HCT116 (cell line): ENCODE measurements at regions of chr13 and their contacts with region 1.

Region 1: GRCh38 chr13:60396783-60397703 is at the start of gene TDRD3:
- DNase-seq: peak; percentile 76
- ATAC-seq: peak; percentile 76
- H3K4me3 ChIP-seq: peak within 1 kb of the TSS; percentile 82 to 84
- H3K27ac ChIP-seq: peak within 1 kb of the TSS; percentile 83
- H3K4me1 ChIP-seq: peaks cover 7 to 26% of the 10 kb centered on the region in 2 experiments
- H3K27me3 ChIP-seq: no peaks in the 10 kb centered on the region
- CTCF ChIP-seq: peak; percentile 37 to 81 (median 77); a peak in 5 of 6 replicates
- POLR2A ChIP-seq: no peak
- RAD21 ChIP-seq: no peak
- total RNA-seq, gene TDRD3: 16.9 TPM

Region 2: DNA sequence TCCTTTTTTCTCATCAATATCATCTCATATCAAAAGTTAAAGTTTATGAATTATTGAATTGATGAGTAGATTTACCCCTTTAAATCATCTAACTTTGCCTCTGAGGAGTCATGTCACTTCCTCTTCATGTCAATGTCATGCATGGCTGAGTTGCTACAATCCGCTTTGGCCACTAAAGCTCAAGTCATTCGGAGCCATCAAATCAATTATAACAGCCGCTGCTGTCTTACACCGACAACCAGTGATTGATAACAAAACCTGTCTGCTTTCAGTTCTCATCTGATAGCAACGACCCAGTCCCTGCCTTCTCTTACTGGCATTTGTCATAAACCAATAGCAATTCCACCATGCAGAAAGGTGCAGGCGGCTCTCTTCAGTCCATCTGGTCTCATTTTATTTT is 662.6 kb before region 1 on chr13:
- CTCF ChIA-PET with region 1: no interaction called
- POLR2A ChIA-PET with region 1: no interaction called
- RAD21 ChIA-PET with region 1: no interaction called
- intact Hi-C with region 1: no loop called
- DNase-seq: no peak
- ATAC-seq: no peak
- H3K4me3 ChIP-seq: no peak overlapping the region
- H3K27ac ChIP-seq: no peak overlapping the region
- H3K4me1 ChIP-seq: no peaks in the 10 kb centered on the region
- H3K27me3 ChIP-seq: no peaks in the 10 kb centered on the region
- CTCF ChIP-seq: no peak
- POLR2A ChIP-seq: no peak
- RAD21 ChIP-seq: no peak

Region 3: DNA sequence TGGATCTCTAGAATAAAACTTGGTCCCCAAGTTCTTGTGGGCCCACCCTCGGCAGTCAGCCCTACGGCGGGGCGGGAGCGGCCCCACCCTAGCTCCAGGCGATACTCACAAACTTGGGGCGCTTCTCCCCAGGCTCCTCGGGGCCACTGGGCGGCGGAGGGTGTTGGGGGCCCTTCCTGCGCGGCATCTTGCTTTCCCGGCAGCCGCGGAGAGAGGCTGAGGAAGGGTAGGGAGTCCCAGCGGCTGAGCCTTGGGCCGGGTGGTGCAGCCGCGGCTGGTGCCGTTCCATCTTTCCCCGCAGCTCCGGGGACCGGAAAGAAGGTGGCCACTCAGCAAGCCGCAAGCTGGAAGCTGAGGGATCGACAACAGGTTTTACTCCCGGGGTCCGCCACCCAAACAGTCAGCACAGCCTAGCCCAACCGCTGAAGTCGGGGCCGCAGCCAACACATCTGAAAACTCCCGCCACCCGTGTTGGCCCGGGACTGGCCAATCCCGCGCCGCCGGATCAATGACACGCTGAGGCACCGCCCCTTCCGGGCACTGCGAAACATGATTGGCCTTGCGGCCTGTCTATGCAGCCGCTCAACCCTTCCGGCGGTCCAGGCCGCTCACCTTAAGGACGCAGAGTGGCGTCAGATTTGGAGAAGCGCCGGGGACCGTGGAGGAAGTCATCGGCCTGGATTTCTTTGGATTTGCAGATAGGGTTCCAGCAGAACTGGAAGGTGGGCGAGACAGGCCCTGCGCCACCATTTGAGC is 233.4 kb before region 1 on chr13 and contains the start of gene DIAPH3:
- CTCF ChIA-PET with region 1: no interaction called
- POLR2A ChIA-PET with region 1: no interaction called
- RAD21 ChIA-PET with region 1: no interaction called
- intact Hi-C with region 1: loop called (anchors 2 kb)
- DNase-seq: peak; percentile 86
- ATAC-seq: peak; percentile 98
- H3K4me3 ChIP-seq: peak within 1 kb of the TSS; percentile 85 to 99
- H3K27ac ChIP-seq: peak within 1 kb of the TSS; percentile 84
- H3K4me1 ChIP-seq: peaks cover 11 to 16% of the 10 kb centered on the region in 2 experiments; a peak in 3 of 4 replicates
- H3K27me3 ChIP-seq: no peaks in the 10 kb centered on the region
- CTCF ChIP-seq: no peak
- POLR2A ChIP-seq: peak; percentile 78
- RAD21 ChIP-seq: no peak
- total RNA-seq, gene DIAPH3: 22.8 TPM

Region 4: DNA sequence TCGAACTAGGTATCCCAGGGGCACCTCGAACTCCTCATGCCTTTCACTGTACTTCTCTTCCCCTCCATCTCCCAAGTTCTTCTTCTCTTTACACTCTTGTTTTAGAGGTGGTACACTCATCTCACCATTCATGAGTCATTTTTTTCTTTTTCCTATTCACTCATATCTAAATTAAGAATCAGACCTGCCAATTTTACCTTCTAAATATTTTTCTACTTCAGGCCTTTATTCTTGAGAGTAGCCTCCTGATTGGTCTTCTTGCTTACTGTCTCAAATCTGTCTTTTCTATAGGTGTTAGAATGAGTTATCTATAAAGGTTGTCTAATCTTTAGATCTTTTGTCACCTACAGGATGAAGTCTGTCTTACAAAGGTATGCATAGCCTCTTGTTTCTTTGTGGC is 20.7 kb after region 1 on chr13:
- CTCF ChIA-PET with region 1: no interaction called
- POLR2A ChIA-PET with region 1: no interaction called
- RAD21 ChIA-PET with region 1: no interaction called
- intact Hi-C with region 1: no loop called
- DNase-seq: no peak
- ATAC-seq: no peak
- H3K4me3 ChIP-seq: no peak overlapping the region
- H3K27ac ChIP-seq: no peak overlapping the region
- H3K4me1 ChIP-seq: no peaks in the 10 kb centered on the region
- H3K27me3 ChIP-seq: no peaks in the 10 kb centered on the region
- CTCF ChIP-seq: no peak
- POLR2A ChIP-seq: no peak
- RAD21 ChIP-seq: no peak

Region 5: GRCh38 chr13:60745343-60745742 is 348.3 kb after region 1 on chr13:
- CTCF ChIA-PET with region 1: no interaction called
- POLR2A ChIA-PET with region 1: no interaction called
- RAD21 ChIA-PET with region 1: no interaction called
- intact Hi-C with region 1: no loop called
- DNase-seq: no peak
- ATAC-seq: no peak
- H3K4me3 ChIP-seq: no peak overlapping the region
- H3K27ac ChIP-seq: no peak overlapping the region
- H3K4me1 ChIP-seq: no peaks in the 10 kb centered on the region
- H3K27me3 ChIP-seq: no peaks in the 10 kb centered on the region
- CTCF ChIP-seq: no peak
- POLR2A ChIP-seq: no peak
- RAD21 ChIP-seq: no peak